ENCODE measurements at regions of chr12 and their contacts with region 1.

Region 1: DNA sequence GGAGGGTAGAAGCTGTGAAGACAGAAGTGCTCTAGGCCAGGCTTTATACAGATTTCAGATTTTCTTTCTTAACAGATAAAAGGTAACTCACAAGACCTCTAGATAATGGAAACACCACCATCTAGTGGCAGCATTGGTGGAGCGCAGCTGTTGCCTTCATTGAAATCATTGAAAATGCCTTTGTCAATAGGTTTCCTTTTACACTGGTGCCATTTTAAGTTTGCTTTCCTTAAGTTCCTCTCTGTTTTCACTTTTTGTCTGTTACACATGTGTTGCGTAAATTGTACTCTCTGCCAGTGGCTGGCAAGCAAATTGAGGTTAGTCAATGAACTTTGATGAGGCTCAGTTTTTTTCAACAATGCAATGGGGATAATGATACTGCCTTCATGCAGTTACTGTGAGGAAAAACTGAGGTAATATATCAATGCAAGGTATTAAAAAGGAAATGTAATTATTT is 31.1 kb downstream of the ALDH1L2 start:
- DNase-seq: peak; percentile 69 to 81 (median 75)
- H3K4me3 ChIP-seq: no peak overlapping the region
- H3K4me3 Mint-ChIP-seq: no peak overlapping the region
- H3K27ac ChIP-seq: no peak overlapping the region
- H3K27ac Mint-ChIP-seq: peak overlapping the region in 4 of 7 donors; percentile 32 to 82 (median 54)
- H3K4me1 ChIP-seq: peaks cover 15 to 22% of the 10 kb centered on the region in 2 donors
- H3K4me1 Mint-ChIP-seq: peaks cover 22% of the 10 kb centered on the region
- H3K27me3 ChIP-seq: no peaks in the 10 kb centered on the region
- H3K27me3 Mint-ChIP-seq: no peaks in the 10 kb centered on the region
- CTCF ChIP-seq: peak; percentile 93

Region 2: GRCh38 chr12:104376650-104377541 is 676.2 kb before region 1 on chr12:
- intact Hi-C with region 1: loop called (anchors 2 to 5 kb)
- DNase-seq: no peak
- H3K4me3 ChIP-seq: no peak overlapping the region
- H3K4me3 Mint-ChIP-seq: no peak overlapping the region
- H3K27ac ChIP-seq: no peak overlapping the region
- H3K27ac Mint-ChIP-seq: peak overlapping the region in 1 of 7 donors; percentile 53
- H3K4me1 ChIP-seq: peaks cover 9 to 15% of the 10 kb centered on the region in 2 donors
- H3K4me1 Mint-ChIP-seq: peaks cover 10% of the 10 kb centered on the region
- H3K27me3 ChIP-seq: no peaks in the 10 kb centered on the region
- H3K27me3 Mint-ChIP-seq: peaks cover 2 to 7% (median 4%) of the 10 kb centered on the region in 3 donors
- CTCF ChIP-seq: no peak

Region 3: GRCh38 chr12:104381731-104382480 is 671.2 kb before region 1 on chr12:
- intact Hi-C with region 1: loop called (anchors 2 to 5 kb)
- DNase-seq: peak; percentile 67 to 78 (median 74)
- H3K4me3 ChIP-seq: no peak overlapping the region
- H3K4me3 Mint-ChIP-seq: peak overlapping the region in 1 of 2 donors; percentile 54
- H3K27ac ChIP-seq: no peak overlapping the region
- H3K27ac Mint-ChIP-seq: peak overlapping the region in 2 of 7 donors; percentile 17 to 31
- H3K4me1 ChIP-seq: peaks cover 0 to 8% of the 10 kb centered on the region in 2 donors
- H3K4me1 Mint-ChIP-seq: peaks cover 7% of the 10 kb centered on the region
- H3K27me3 ChIP-seq: no peaks in the 10 kb centered on the region
- H3K27me3 Mint-ChIP-seq: peaks cover 1 to 3% (median 2%) of the 10 kb centered on the region in 3 donors
- CTCF ChIP-seq: peak; percentile 88

Region 4: DNA sequence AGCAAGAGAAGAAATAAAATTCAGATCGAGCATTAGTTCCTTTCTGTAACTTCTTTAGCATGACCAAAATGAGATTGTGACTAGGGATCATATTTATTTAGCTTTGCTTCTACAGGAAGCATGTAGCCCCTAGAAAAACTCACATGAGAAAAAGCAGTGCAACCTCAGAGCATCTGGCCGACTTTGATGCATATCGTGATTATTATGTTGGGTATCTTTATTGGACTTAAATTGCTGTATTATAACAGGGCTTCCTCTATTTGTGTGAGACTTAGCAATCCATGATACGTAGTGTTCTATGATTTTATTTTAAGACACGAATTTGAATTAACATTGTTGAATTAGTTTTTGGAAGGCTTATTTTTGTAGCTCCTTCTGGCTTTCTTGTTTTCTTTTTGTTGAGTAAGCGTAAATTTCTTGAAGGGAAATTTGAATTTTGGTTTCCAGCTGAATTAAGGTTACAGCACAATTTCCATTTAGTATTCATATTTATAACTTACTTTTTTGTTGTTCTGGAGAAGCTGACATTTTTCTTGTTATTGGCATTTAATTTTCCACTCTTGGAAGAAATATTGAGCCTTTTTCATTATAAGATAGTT is 88.3 kb after region 1 on chr12:
- intact Hi-C with region 1: no loop called
- DNase-seq: no peak
- H3K4me3 ChIP-seq: no peak overlapping the region
- H3K4me3 Mint-ChIP-seq: no peak overlapping the region
- H3K27ac ChIP-seq: no peak overlapping the region
- H3K27ac Mint-ChIP-seq: peak overlapping the region in 2 of 7 donors; percentile 6 to 20
- H3K4me1 ChIP-seq: no peaks in the 10 kb centered on the region
- H3K4me1 Mint-ChIP-seq: no peaks in the 10 kb centered on the region
- H3K27me3 ChIP-seq: no peaks in the 10 kb centered on the region
- H3K27me3 Mint-ChIP-seq: no peaks in the 10 kb centered on the region
- CTCF ChIP-seq: no peak